ENCODE measurements at regions of chr7 and their contacts with region 1.

Region 1: DNA sequence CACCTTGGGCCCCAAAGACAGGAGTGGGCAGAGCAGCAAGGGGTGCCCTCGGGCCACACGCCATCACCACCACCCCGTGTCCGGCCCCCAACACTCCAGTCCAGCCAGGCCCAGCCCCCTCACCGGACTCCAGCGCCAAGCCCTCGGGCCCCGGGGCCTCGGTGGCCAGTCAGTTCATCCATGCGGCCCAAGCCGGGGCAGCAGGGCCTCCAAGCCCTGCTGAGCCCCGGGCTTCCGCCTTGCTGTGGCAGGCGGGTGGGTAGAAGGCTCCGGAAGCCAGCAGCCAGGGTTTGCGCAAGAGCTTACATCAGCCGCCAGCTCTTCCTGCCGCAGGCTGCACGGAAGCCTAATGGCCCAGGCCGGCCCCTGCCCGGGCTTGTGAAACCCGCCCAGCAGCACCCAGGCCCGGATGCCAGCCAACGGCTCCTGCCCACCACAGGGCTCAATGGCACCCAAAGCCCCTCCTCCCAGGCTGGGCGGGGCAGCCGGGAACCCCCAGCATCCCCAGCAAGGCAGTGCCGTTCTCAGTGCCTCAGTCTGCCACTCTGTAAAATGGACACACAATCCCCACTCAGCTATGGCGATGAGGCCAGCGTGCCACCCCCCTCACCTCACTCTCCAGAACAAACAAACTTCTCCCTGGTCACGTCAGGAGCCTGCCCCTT is 26.5 kb downstream of the TNRC18 start:
- DNase-seq: peak; percentile 94
- ATAC-seq: peak; percentile 93
- H3K4me3 Mint-ChIP-seq: peak overlapping the region; percentile 66
- H3K27ac Mint-ChIP-seq: peak overlapping the region; percentile 87
- H3K4me1 Mint-ChIP-seq: peaks cover 25% of the 10 kb centered on the region
- H3K27me3 Mint-ChIP-seq: no peaks in the 10 kb centered on the region

Region 2: GRCh38 chr7:5139998-5140397 is 257.1 kb before region 1 on chr7:
- CTCF ChIA-PET with region 1: no interaction called
- POLR2A ChIA-PET with region 1: no interaction called
- intact Hi-C with region 1: loop called in 1 of 2 experiments (anchors 5 kb)
- DNase-seq: peak; percentile 60
- ATAC-seq: no peak
- H3K4me3 Mint-ChIP-seq: no peak overlapping the region
- H3K27ac Mint-ChIP-seq: no peak overlapping the region
- H3K4me1 Mint-ChIP-seq: peaks cover 15% of the 10 kb centered on the region
- H3K27me3 Mint-ChIP-seq: no peaks in the 10 kb centered on the region

Region 3: GRCh38 chr7:5237286-5237685 is 159.8 kb before region 1 on chr7:
- CTCF ChIA-PET with region 1: interaction called, 4 read pairs
- POLR2A ChIA-PET with region 1: no interaction called
- intact Hi-C with region 1: loop called in 1 of 2 experiments (anchors 1 kb)
- DNase-seq: no peak
- ATAC-seq: no peak
- H3K4me3 Mint-ChIP-seq: no peak overlapping the region
- H3K27ac Mint-ChIP-seq: no peak overlapping the region
- H3K4me1 Mint-ChIP-seq: peaks cover 17% of the 10 kb centered on the region
- H3K27me3 Mint-ChIP-seq: peaks cover 12% of the 10 kb centered on the region

Region 4: DNA sequence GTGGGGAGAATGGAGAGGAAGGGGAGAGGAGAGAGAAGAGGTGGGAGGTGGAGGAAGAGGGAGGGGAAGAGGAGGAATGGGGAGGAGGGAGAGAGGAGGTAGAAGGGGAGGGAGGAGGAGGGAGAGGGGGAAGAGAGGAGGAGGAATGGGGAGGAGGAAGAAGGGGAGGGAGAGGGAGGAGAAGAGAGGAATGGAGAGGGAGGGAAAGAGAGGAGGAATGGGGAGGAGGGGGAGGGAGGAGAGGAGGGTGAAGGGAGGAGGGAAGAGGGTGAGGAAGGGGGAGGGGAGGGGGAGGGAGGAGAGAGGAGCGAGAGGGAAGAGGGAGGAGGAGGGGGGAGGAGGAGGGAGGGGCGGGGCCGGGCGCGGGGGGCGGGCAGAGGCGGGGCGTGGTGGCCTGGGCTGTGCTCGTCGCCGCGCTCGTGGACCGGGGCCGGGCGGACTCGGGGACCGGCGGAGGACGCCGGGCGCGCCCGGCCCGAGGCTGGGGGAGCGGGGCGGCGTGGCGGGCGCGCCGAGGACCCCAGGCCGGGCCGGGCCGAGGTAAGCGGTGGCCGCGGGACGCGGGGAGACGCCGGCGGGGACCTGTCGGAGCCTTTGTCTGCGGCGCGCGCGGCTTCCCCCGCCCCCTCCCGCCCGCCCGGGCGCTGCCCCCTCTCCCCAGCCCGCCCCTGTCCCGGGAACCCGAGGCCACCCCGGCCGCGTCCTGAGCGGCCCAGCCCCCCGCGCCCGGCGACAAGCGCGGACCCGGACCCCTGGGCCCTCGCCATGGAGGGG is 114.4 kb before region 1 on chr7 and contains the start of gene SLC29A4:
- CTCF ChIA-PET with region 1: no interaction called
- POLR2A ChIA-PET with region 1: no interaction called
- intact Hi-C with region 1: no loop called
- DNase-seq: peak; percentile 47
- ATAC-seq: peak; percentile 68
- H3K4me3 Mint-ChIP-seq: no peak within 1 kb of the TSS
- H3K27ac Mint-ChIP-seq: no peak within 1 kb of the TSS
- H3K4me1 Mint-ChIP-seq: no peaks in the 10 kb centered on the region
- H3K27me3 Mint-ChIP-seq: peaks cover 9% of the 10 kb centered on the region
- total RNA-seq, gene SLC29A4: 1.0 to 1.7 TPM

Region 5: GRCh38 chr7:5320802-5321396 is 76.2 kb before region 1 on chr7:
- CTCF ChIA-PET with region 1: interaction called, 3 read pairs
- POLR2A ChIA-PET with region 1: interaction called, 10 read pairs
- intact Hi-C with region 1: no loop called
- DNase-seq: no peak
- ATAC-seq: no peak
- H3K4me3 Mint-ChIP-seq: no peak overlapping the region
- H3K27ac Mint-ChIP-seq: no peak overlapping the region
- H3K4me1 Mint-ChIP-seq: no peaks in the 10 kb centered on the region
- H3K27me3 Mint-ChIP-seq: no peaks in the 10 kb centered on the region

Region 6: GRCh38 chr7:5423844-5424688 is 26.9 kb after region 1 on chr7:
- CTCF ChIA-PET with region 1: interaction called, 6 read pairs
- POLR2A ChIA-PET with region 1: interaction called, 6 read pairs
- intact Hi-C with region 1: loop called (anchors 1 to 2 kb)
- DNase-seq: peak; percentile 70
- ATAC-seq: peak; percentile 60
- H3K4me3 Mint-ChIP-seq: peak overlapping the region; percentile 62
- H3K27ac Mint-ChIP-seq: no peak overlapping the region
- H3K4me1 Mint-ChIP-seq: peaks cover 35% of the 10 kb centered on the region
- H3K27me3 Mint-ChIP-seq: peaks cover 56% of the 10 kb centered on the region

Region 7: GRCh38 chr7:5450549-5451372 is 53.6 kb after region 1 on chr7:
- CTCF ChIA-PET with region 1: interaction called, 3 read pairs
- POLR2A ChIA-PET with region 1: no interaction called
- intact Hi-C with region 1: loop called in 1 of 2 experiments (anchors 1 kb)
- DNase-seq: peak; percentile 61
- ATAC-seq: peak; percentile 74
- H3K4me3 Mint-ChIP-seq: no peak overlapping the region
- H3K27ac Mint-ChIP-seq: no peak overlapping the region
- H3K4me1 Mint-ChIP-seq: no peaks in the 10 kb centered on the region
- H3K27me3 Mint-ChIP-seq: peaks cover 5% of the 10 kb centered on the region

Region 8: DNA sequence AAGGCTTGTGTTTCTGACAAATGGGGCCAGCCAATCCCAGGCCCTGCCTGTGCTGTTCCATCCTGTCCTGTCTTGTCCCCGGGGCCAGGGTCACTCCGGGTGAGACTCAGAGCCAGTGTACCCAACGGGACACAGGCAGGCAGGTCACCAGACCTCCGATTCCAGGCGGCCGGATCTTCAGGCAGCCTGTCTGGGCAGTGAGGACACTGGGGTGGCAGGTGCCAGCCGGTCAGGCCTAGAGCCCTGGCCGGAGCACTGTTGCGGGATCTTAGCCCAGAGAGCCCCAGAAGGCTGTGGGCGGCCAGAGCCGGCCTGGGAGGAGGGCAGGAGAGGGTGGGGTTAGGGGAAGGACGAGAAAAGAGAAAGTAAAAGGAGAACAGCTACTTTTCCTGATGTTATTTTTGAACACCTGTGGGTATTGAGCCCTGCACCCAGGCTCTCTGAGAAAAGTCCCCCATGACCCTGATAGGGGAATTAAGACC is 160.8 kb after region 1 on chr7:
- CTCF ChIA-PET with region 1: no interaction called
- POLR2A ChIA-PET with region 1: no interaction called
- intact Hi-C with region 1: loop called in 1 of 2 experiments (anchors 1 kb)
- DNase-seq: peak; percentile 45
- ATAC-seq: no peak
- H3K4me3 Mint-ChIP-seq: peak overlapping the region; percentile 65
- H3K27ac Mint-ChIP-seq: peak overlapping the region; percentile 88
- H3K4me1 Mint-ChIP-seq: peaks cover 39% of the 10 kb centered on the region
- H3K27me3 Mint-ChIP-seq: peaks cover 2% of the 10 kb centered on the region

Region 9: GRCh38 chr7:5646852-5647251 is 249.7 kb after region 1 on chr7:
- CTCF ChIA-PET with region 1: no interaction called
- POLR2A ChIA-PET with region 1: no interaction called
- intact Hi-C with region 1: no loop called
- DNase-seq: no peak
- ATAC-seq: no peak
- H3K4me3 Mint-ChIP-seq: no peak overlapping the region
- H3K27ac Mint-ChIP-seq: no peak overlapping the region
- H3K4me1 Mint-ChIP-seq: peaks cover 32% of the 10 kb centered on the region
- H3K27me3 Mint-ChIP-seq: no peaks in the 10 kb centered on the region